Esophagus squamous epithelium (tissue), 5 donors: ENCODE measurements at regions of chr19 and their contacts with region 1.

Region 1: DNA sequence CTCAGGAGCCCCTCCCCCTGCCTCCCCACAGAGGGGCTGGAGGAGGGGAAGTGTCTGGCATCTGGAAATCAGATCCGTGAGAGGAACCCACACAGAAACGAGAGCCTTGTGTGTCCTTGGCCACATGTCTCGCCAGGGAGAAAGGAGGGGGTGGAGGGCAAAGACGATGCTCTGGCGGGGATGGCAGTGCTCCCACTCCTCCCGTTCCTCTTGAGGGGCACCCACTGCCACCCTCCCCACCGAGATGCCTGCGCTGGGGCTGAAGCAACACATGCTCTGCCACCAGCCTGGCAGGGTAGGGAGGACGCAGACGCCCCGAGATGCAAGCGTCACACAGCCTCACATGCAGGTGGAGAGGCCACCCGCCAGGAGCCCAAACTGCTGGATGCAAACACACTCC is 2.8 kb downstream of the ADGRL1 start:
- DNase-seq: no peak
- H3K4me3 ChIP-seq: no peak overlapping the region
- H3K27ac ChIP-seq: no peak overlapping the region
- H3K4me1 ChIP-seq: peaks cover 9 to 45% (median 12%) of the 10 kb centered on the region in 3 donors
- H3K27me3 ChIP-seq: peaks cover 0 to 18% (median 0%) of the 10 kb centered on the region in 4 donors
- CTCF ChIP-seq: no peak
- POLR2A ChIP-seq: no peak

Region 2: GRCh38 chr19:14277608-14278007 is 74.4 kb after region 1 on chr19:
- intact Hi-C with region 1: no loop called
- DNase-seq: no peak
- H3K4me3 ChIP-seq: no peak overlapping the region
- H3K27ac ChIP-seq: no peak overlapping the region
- H3K4me1 ChIP-seq: no peaks in the 10 kb centered on the region
- H3K27me3 ChIP-seq: peaks cover 0 to 9% (median 0%) of the 10 kb centered on the region in 4 donors
- CTCF ChIP-seq: no peak
- POLR2A ChIP-seq: no peak

Region 3: DNA sequence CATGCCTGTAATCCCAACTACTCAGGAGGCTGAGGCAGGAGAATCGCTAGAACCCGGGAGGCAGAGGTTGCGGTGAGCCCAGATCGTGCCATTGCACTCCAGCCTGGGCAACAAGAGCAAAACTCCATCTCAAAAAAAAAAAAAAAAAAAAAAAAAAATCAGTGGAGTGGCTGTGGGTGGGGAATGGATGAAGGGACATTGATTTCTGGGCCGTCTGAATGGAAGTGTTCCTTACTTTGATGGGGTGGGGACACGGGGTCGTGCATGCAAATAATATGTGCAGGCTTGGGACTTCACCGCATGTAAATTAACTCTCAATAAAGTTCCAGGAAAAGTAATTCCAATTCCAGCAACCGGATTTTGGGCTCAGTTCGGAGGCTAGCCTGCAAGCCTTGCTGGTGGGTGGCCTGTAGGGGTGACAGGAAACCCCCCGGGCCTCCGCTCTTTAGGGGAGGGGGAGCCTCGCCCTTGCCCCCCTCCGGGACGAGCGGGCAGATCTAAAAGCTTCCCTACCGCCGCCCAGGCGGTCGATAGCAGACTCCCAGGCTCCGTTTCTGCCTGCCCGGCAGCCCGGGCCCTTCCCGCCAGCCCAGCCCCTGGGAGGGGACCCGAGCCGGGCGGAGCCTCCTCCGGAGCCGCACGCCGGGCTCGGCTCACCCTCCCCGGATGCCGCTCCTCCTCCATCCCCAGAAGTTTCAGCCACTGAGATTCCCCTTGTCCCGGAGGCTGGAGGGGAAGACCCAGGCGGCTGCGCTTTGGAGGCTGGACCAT is 130.1 kb after region 1 on chr19:
- intact Hi-C with region 1: no loop called
- DNase-seq: no peak
- H3K4me3 ChIP-seq: peak overlapping the region; percentile 7 to 55 (median 32)
- H3K27ac ChIP-seq: peak overlapping the region in 3 of 4 donors; percentile 23 to 53 (median 31)
- H3K4me1 ChIP-seq: peaks cover 6 to 8% (median 7%) of the 10 kb centered on the region in 3 donors
- H3K27me3 ChIP-seq: no peaks in the 10 kb centered on the region
- CTCF ChIP-seq: no peak
- POLR2A ChIP-seq: no peak

Region 4: DNA sequence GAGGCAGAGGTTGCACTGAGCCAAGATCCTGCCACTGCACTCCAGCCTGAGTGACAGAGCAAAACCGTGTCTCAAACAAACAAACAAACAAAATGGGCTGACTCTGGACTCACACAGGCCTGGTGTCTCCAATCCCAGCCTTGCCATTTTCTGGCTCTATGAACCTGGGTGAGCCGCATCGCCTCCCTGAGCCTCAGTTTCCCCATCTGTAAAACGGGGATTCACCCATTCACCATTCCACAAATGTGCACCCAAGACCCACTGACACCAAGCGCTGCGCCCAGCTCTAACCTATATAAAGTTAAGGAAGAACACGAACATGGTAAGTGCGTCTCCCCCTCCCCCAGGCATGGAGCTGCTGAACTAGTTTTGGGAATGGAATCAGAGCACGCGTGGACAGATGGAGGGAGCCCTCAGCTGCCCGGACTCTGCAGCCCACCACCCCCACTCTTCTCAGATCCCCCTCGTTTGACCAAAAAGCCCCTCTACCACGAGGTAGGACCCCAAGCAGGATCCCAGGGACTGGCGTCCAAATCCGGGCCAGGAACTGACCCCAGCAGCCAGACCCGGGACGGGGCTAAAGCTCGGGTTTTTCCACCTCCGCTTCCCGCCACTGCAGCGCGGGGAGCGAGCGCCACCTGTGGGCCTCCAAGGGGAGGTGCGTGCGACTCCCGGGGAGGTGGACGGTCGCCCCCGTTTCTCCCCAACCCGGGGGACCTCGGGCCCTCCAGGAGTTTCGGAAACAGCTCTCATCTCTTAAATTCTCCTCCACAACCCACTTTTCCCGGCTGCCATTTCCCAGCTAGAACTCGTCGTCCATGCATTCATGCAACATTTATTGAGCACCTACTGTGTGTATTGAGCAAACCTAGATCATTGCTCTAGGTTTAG is 145.1 kb after region 1 on chr19:
- intact Hi-C with region 1: loop called (anchors 10 kb)
- DNase-seq: no peak
- H3K4me3 ChIP-seq: peak overlapping the region; percentile 13 to 52 (median 28)
- H3K27ac ChIP-seq: no peak overlapping the region
- H3K4me1 ChIP-seq: peaks cover 0 to 14% (median 0%) of the 10 kb centered on the region in 3 donors
- H3K27me3 ChIP-seq: peaks cover 0 to 19% (median 0%) of the 10 kb centered on the region in 4 donors
- CTCF ChIP-seq: peak; percentile 88 to 98 (median 96)
- POLR2A ChIP-seq: no peak